HepG2 (cell line): ENCODE measurements at regions of chr11 and their contacts with region 1.

Region 1: GRCh38 chr11:117098269-117099232 is at the start of gene SIK3:
- DNase-seq: peak; percentile 65
- ATAC-seq: peak; percentile 66
- H3K4me3 ChIP-seq: peak within 1 kb of the TSS; percentile 79 to 89 (median 87)
- H3K27ac ChIP-seq: peak within 1 kb of the TSS; percentile 80
- H3K4me1 ChIP-seq: peaks cover 53% of the 10 kb centered on the region
- H3K27me3 ChIP-seq: no peaks in the 10 kb centered on the region; a peak in 1 of 5 replicates
- CTCF ChIP-seq: peak; percentile 72
- EP300 ChIP-seq: no peak
- POLR2A ChIP-seq: peak in 1 of 2 experiments; percentile 37; a peak in 1 of 4 replicates
- RAD21 ChIP-seq: peak; percentile 68; the same call in 1 of the 2 replicates
- total RNA-seq, gene SIK3: 9.8 and 11.3 TPM in 2 replicates

Region 2: GRCh38 chr11:116829525-116830183 is 268.9 kb before region 1 on chr11 and contains the start of gene APOC3:
- CTCF ChIA-PET with region 1: no interaction called
- POLR2A ChIA-PET with region 1: interaction called, 69 read pairs
- in situ Hi-C with region 1: no loop called
- intact Hi-C with region 1: no loop called
- DNase-seq: peak; percentile 85
- ATAC-seq: peak; percentile 36
- H3K4me3 ChIP-seq: peak within 1 kb of the TSS; percentile 61 to 79 (median 62)
- H3K27ac ChIP-seq: peak within 1 kb of the TSS; percentile 99
- H3K4me1 ChIP-seq: peaks cover 95% of the 10 kb centered on the region
- H3K27me3 ChIP-seq: no peaks in the 10 kb centered on the region
- CTCF ChIP-seq: peak; percentile 33; the same call in 1 of the 2 replicates
- EP300 ChIP-seq: peak; percentile 41 to 46; a peak in 2 of 4 replicates
- POLR2A ChIP-seq: peak in 1 of 2 experiments; percentile 84; a peak in 2 of 4 replicates
- RAD21 ChIP-seq: peak; percentile 65
- total RNA-seq, gene APOC3: 179 and 314 TPM in 2 replicates

Region 3: DNA sequence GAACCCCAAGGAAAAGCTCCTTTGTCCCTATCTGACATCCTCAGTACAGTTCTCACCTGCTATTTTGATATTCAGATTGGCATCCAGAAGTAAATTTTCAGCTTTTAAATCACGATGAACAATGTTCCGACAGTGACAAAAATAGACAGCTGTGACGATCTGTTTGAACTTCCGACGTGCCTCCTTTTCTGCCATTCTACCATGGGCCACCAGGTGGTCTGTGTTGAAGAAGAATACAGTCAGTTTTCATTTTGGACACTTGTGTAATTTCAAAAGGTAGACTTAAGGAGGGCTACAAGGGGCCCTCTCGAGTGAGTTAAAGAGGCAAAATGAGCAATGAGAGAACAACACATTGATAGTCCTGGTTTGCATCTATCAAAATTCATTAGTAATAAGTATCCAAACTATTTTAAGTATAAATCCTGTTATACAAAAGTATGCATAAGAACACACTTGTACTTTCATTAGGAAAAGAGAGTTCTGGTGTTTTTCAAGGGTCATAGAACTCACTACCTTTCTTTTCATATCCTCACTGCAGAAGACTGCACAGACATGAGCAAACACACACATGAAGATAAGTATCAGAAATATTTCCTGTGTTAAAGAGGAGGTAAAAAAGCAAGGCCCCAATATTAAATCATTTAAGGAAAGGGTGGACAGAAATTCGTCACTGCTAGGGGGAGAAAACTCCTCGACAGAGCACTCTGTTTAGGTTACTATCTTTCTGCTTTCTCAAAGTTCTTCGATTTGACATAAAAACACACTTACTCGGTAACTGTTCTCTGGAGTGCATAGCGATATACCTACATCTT is 171.2 kb before region 1 on chr11:
- CTCF ChIA-PET with region 1: no interaction called
- POLR2A ChIA-PET with region 1: interaction called, 8 read pairs
- in situ Hi-C with region 1: no loop called
- intact Hi-C with region 1: loop called (anchors 2 kb)
- DNase-seq: peak; percentile 13
- ATAC-seq: 0 out of 3 replicates have a peak, but pooled peaks have one; percentile 18
- H3K4me3 ChIP-seq: no peak overlapping the region
- H3K27ac ChIP-seq: no peak overlapping the region
- H3K4me1 ChIP-seq: peaks cover 60% of the 10 kb centered on the region
- H3K27me3 ChIP-seq: no peaks in the 10 kb centered on the region
- CTCF ChIP-seq: peak; percentile 30
- EP300 ChIP-seq: no peak
- POLR2A ChIP-seq: no peak
- RAD21 ChIP-seq: no peak

Region 4: GRCh38 chr11:117076941-117077691 is 21.4 kb before region 1 on chr11:
- CTCF ChIA-PET with region 1: no interaction called
- POLR2A ChIA-PET with region 1: interaction called, 25 read pairs
- in situ Hi-C with region 1: no loop called
- intact Hi-C with region 1: loop called (anchors 2 kb)
- DNase-seq: peak; percentile 96
- ATAC-seq: peak; percentile 91
- H3K4me3 ChIP-seq: peak overlapping the region in 1 of 3 experiments; percentile 5; a peak in 1 of 6 replicates
- H3K27ac ChIP-seq: peak overlapping the region; percentile 57
- H3K4me1 ChIP-seq: peaks cover 53% of the 10 kb centered on the region
- H3K27me3 ChIP-seq: no peaks in the 10 kb centered on the region
- CTCF ChIP-seq: no peak
- EP300 ChIP-seq: peak in 1 of 2 experiments; percentile 89; a peak in 2 of 4 replicates
- POLR2A ChIP-seq: no peak
- RAD21 ChIP-seq: no peak

Region 5: GRCh38 chr11:117134431-117134830 is 35.9 kb after region 1 on chr11:
- CTCF ChIA-PET with region 1: no interaction called
- POLR2A ChIA-PET with region 1: no interaction called
- in situ Hi-C with region 1: no loop called
- intact Hi-C with region 1: no loop called
- DNase-seq: no peak
- ATAC-seq: no peak
- H3K4me3 ChIP-seq: no peak overlapping the region
- H3K27ac ChIP-seq: no peak overlapping the region
- H3K4me1 ChIP-seq: peaks cover 12% of the 10 kb centered on the region
- H3K27me3 ChIP-seq: no peaks in the 10 kb centered on the region; a peak in 1 of 5 replicates
- CTCF ChIP-seq: no peak
- EP300 ChIP-seq: no peak
- POLR2A ChIP-seq: no peak
- RAD21 ChIP-seq: no peak

Region 6: GRCh38 chr11:117199061-117199915 is 100.7 kb after region 1 on chr11 and contains the start of gene TAGLN:
- CTCF ChIA-PET with region 1: no interaction called
- POLR2A ChIA-PET with region 1: no interaction called
- in situ Hi-C with region 1: no loop called
- intact Hi-C with region 1: no loop called
- DNase-seq: peak; percentile 21
- ATAC-seq: peak; percentile 30
- H3K4me3 ChIP-seq: no peak within 1 kb of the TSS; a peak in 3 of 6 replicates
- H3K27ac ChIP-seq: no peak within 1 kb of the TSS
- H3K4me1 ChIP-seq: peaks cover 9% of the 10 kb centered on the region
- H3K27me3 ChIP-seq: no peaks in the 10 kb centered on the region
- CTCF ChIP-seq: no peak
- EP300 ChIP-seq: no peak
- POLR2A ChIP-seq: no peak
- RAD21 ChIP-seq: no peak
- total RNA-seq, gene TAGLN: 75.4 and 93.7 TPM in 2 replicates